Prostate gland (tissue), 2 donors: ENCODE measurements at regions of chr7 and their contacts with region 1.

Region 1: DNA sequence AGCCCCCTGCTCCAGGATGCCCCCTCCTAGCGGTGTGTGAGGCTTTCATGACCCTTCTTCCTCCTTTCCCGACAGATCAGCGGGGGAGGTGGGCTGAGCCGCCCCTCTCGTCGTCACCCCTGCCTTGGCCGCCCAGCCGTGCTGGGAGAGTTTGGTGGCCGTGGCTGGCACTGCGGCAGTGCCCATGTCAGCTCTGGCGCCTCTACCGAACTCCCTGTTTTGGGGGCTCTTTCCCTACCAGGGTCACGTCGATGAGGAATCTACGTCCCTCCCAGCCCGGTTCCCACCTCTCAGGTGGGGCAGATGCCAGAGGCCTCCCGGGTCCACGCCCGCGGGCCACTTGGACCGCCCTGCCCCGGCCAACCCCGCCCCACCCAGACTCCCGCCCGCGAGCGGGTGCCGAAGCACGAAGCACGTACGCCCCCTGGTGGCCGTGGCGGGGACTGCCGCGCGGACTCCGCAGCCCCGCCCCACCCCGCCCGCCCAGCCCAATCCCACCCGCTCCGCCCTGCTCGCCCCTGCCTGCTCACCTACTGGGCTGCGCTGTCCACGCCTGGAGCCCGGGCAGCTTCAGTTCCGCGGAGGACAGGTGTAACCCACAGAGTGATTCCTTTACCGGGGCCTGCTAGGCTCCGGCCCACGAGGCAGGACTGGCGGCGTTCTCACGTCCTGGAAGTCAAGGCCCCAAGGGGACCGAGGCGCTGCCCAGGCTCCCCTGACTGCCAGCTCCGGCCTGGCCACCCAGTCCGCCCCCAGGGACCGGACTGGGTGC is 127.1 kb downstream of the UBE2H start:
- DNase-seq: peak; percentile 85
- H3K4me3 ChIP-seq: peak overlapping the region; percentile 46 to 57
- H3K27ac ChIP-seq: peak overlapping the region; percentile 67 to 74
- H3K4me1 ChIP-seq: no peaks in the 10 kb centered on the region
- H3K27me3 ChIP-seq: no peaks in the 10 kb centered on the region
- CTCF ChIP-seq: peak; percentile 61 to 99 (median 86)
- POLR2A ChIP-seq: no peak

Region 2: GRCh38 chr7:129367700-129368388 is 457.8 kb before region 1 on chr7:
- intact Hi-C with region 1: loop called (anchors 10 kb)
- DNase-seq: peak; percentile 65
- H3K4me3 ChIP-seq: no peak overlapping the region
- H3K27ac ChIP-seq: no peak overlapping the region
- H3K4me1 ChIP-seq: no peaks in the 10 kb centered on the region
- H3K27me3 ChIP-seq: no peaks in the 10 kb centered on the region
- CTCF ChIP-seq: peak; percentile 37 to 81 (median 76)
- POLR2A ChIP-seq: peak; percentile 59

Region 3: DNA sequence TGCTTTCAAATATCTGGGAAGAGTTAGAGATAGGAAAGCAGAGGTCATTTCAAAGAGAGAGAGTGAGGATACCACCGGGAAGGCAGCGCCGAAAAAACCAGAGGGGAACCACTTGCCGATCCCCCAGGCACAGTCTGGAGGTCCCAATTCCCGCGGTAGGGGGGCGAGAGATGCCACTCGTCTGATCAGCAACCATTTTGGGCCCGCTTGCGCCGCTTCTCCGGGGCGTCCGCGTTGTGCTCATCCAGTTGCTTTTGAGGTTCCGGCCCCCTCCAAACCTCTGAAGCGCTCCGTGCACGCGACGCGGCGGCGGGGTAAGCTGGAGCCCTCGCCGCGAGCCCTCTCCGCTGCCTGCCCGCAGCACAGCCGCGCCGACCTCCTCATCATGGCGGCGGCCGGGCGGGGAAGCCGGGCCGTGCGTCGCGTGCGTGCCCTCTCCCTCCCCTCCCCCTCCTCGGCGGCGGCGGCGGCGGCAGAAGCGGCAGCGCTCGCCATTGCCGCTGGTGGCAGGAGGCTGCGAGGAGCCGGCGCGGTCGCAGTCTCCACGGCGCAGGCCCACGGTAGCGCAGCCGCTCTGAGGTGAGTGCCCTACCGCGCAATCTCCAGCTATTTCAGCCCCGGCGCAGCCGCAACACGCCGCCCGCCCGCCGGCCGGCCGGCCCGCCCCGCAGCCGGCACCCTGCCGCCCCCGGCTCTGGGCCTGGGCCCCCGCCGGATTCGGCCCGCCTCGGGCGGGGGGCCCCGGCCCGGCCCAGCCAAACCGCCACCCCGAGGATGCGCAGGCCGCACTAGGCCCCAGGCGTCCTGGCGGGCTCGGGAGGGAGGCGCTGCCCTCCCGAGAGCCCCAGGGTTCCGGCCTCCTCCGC is 214.2 kb before region 1 on chr7 and contains the start of gene NRF1:
- intact Hi-C with region 1: loop called (anchors 5 kb)
- DNase-seq: peak; percentile 87
- H3K4me3 ChIP-seq: peak within 1 kb of the TSS; percentile 72 to 79
- H3K27ac ChIP-seq: peak within 1 kb of the TSS; percentile 92
- H3K4me1 ChIP-seq: peaks cover 7% of the 10 kb centered on the region
- H3K27me3 ChIP-seq: no peaks in the 10 kb centered on the region
- CTCF ChIP-seq: peak in 2 of 4 experiments; percentile 49 to 51
- POLR2A ChIP-seq: peak; percentile 66
- total RNA-seq, gene NRF1: 22.3 to 27.0 TPM

Region 4: DNA sequence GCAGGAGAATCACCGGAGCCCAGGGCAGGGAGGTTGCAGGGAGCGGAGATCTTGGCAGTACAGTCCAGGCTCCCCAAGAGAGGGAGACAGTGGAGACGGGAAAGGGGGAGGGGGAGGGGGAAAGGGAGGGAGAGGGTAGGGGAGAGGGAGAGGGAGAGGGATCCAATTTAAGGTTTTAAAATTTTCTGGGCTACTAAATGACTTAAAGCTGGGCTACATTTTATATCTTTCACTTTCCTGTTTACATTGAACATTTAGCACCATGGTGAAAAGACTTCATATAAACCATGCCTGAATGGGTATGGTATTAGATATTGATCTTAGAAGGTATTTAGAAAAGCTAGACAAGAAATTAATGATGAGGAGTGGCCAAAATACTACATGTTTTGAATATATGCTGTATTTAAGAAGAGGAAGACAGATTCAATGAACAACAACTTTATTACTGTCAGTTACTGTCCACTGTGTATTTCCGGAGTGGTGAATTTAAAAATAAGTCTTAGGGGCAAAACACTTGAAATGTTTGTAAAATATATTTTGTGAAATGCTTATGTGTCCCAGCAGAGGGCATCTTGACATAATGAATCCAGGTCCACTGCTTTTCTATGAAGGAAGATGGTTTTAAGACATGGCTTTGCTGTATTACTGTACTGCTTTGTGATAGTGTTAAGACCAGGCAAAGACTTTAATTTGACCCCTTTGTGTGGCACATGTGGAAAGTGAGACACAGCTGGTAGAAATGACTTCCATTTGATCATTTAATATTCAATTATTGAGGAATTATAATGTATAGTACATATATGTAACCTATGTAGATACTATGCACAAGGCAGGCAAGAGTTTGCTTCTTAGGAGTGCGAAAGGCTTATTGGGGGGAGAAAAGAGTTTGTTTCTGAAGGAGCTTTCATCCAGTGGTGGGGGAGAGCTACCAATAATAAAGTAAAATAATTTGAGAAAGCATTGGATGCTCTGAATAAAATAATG is 161.4 kb before region 1 on chr7:
- intact Hi-C with region 1: loop called (anchors 10 kb)
- DNase-seq: no peak
- H3K4me3 ChIP-seq: no peak overlapping the region
- H3K27ac ChIP-seq: no peak overlapping the region
- H3K4me1 ChIP-seq: no peaks in the 10 kb centered on the region
- H3K27me3 ChIP-seq: no peaks in the 10 kb centered on the region
- CTCF ChIP-seq: peak; percentile 11 to 72 (median 53)
- POLR2A ChIP-seq: no peak

Region 5: DNA sequence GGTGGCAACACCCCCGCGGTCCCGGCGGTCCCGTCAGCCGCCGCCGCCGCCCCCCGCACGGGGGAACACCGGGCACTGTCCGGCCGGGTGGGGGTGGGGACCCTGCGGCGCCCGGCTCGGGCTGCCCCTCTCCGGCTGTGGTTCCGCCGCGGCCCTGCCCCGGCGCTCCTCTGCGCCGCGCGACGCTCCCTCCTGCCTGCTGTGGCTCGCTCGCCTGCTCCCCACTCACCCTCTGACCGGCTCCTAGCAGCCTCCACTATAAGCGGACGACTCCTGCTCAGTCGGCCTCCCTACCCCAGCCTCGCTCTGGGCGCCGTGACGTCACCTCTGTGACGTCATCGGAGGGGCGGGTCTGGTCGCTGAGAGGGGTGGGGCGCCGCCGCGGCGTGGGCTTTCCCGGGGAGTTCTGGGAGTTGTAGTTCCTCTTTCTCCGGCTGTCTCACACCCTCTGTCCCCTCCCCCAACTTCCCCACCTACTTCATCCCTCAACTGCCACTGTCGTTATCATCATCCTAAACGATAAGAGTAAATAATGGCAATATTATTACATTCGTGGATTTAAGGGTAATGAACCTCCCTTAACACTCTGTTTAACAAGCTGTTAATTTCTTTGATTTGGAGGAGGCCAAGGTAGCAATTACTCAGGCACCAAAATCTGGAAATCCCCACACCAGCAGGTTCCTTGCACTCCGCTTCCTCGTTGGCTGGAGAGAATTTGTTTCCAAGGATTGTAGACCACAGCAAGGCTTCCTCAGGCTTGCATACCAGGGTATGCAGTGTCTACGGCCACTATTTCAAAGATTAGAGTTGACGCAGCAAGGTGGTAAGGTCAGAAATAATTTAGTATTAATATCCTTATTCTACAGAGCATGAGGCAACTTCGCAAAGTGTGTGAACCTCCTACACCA is 127.2 kb after region 1 on chr7 and contains the start of gene UBE2H:
- intact Hi-C with region 1: loop called (anchors 2 kb)
- DNase-seq: peak; percentile 91
- H3K4me3 ChIP-seq: peak within 1 kb of the TSS; percentile 92 to 97
- H3K27ac ChIP-seq: peak within 1 kb of the TSS; percentile 85 to 99
- H3K4me1 ChIP-seq: peaks cover 11% of the 10 kb centered on the region
- H3K27me3 ChIP-seq: no peaks in the 10 kb centered on the region
- CTCF ChIP-seq: no peak
- POLR2A ChIP-seq: peak; percentile 100
- total RNA-seq, gene UBE2H: 78.4 to 105 TPM

Region 6: DNA sequence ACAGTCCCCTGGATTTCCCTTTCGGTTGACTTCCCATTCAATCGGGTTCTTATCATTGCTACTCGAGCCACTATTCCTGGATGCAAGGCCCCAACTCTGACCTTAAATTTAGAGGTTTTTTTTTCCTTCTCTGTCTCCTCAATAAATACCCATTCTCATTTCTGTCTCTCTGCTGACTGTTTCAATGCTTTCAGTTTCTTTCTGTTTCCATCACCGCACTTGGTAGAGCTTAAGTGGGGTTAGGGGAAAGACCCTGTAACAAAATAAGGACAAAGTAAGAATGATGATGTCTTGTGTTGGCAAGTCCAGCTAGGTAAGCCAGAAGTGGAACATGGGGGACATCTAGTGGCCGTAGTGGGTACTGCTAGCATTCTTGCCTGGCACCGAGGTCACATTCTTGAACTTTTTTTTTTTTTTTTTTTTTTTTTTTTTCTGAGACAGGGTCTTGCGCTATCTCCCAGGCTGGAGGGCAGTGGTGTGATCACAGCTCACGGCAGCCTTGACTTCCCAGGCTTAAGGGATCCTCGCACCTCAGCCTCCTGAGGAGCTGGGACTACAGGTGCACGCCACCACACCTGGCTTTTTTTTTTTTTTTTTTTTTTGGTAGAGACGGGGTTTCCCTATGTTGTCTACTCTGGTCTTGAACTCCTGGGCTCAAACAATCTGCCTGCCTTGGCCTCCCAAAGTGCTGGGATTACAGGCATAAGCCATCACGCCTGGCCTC is 185.2 kb after region 1 on chr7:
- intact Hi-C with region 1: loop called (anchors 2 kb)
- DNase-seq: peak; percentile 77
- H3K4me3 ChIP-seq: no peak overlapping the region
- H3K27ac ChIP-seq: no peak overlapping the region
- H3K4me1 ChIP-seq: no peaks in the 10 kb centered on the region
- H3K27me3 ChIP-seq: no peaks in the 10 kb centered on the region
- CTCF ChIP-seq: peak; percentile 76 to 91 (median 84)
- POLR2A ChIP-seq: no peak

Region 7: DNA sequence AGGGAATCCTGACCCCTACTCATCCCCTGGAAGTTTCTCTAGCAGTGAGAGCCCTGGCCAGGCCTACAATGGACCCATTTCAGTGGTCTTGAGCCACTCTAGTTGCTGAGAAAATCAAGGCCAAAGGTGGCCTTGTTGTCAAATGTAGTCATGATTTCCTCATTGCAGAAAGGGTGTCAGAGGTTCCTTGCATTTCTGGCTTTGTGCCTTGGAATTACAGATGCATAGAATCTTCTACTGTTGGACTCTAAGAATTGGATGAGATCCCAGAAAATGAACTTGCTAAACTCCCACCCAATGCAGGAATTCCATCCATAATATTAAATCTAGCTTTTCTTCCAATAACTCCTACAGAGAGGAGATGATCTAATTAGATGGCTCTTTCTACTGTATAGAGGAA is 453.2 kb after region 1 on chr7:
- intact Hi-C with region 1: no loop called
- DNase-seq: no peak
- H3K4me3 ChIP-seq: no peak overlapping the region
- H3K27ac ChIP-seq: no peak overlapping the region
- H3K4me1 ChIP-seq: no peaks in the 10 kb centered on the region
- H3K27me3 ChIP-seq: no peaks in the 10 kb centered on the region
- CTCF ChIP-seq: no peak
- POLR2A ChIP-seq: no peak